PC-3 (cell line): ENCODE measurements at regions of chr1 and their contacts with region 1.

Region 1: GRCh38 chr1:44862829-44863401 is 19.9 kb upstream of the PTCH2 start:
- DNase-seq: peak; percentile 17
- ATAC-seq: no peak
- H3K4me3 ChIP-seq: no peak overlapping the region
- H3K27ac ChIP-seq: no peak overlapping the region
- H3K4me1 ChIP-seq: no peaks in the 10 kb centered on the region
- H3K27me3 ChIP-seq: no peaks in the 10 kb centered on the region
- CTCF ChIP-seq: no peak

Region 2: DNA sequence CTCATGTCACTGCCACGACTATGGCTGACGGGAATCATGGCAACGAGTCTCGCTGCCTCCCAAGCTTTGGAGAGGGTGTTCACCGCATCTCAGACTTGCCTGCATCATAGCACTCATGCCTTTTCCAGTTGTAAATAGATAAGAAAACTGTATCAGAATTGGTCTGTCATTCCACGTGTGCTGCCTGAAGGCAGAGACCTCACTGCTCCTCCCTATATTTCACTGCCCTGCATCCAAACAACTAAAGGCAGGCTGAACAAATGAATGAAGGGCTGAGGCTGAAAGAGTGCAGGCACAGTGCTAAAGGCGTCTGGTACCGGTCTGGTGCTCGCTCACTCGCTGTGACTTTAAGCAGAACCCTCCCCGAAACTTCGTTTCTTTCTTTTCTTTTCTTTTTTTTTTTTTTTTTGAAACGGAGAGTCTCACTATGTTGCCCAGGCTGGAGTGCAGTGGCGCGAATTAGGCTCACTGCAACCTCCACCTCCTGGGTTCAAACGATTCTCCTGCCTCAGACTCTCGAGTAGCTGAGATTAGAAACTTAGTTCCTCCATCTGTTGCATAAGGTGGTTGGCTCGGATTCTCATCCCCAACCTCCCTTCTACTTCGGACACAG is 122.9 kb after region 1 on chr1:
- CTCF ChIA-PET with region 1: no interaction called
- POLR2A ChIA-PET with region 1: interaction called, 12 read pairs
- intact Hi-C with region 1: no loop called
- DNase-seq: no peak
- ATAC-seq: peak; percentile 19
- H3K4me3 ChIP-seq: peak overlapping the region; percentile 82
- H3K27ac ChIP-seq: 0 out of 2 replicates have a peak overlapping the region, but pooled peaks have one; percentile 5
- H3K4me1 ChIP-seq: peaks cover 3% of the 10 kb centered on the region; the same call in 1 of the 2 replicates
- H3K27me3 ChIP-seq: no peaks in the 10 kb centered on the region
- CTCF ChIP-seq: no peak